ENCODE measurements at regions of chr20 and their contacts with region 1.

Region 1: GRCh38 chr20:1313236-1313964 is 15.5 kb downstream of the SDCBP2 start:
- DNase-seq: peak; percentile 63 to 75
- H3K4me3 ChIP-seq: no peak overlapping the region
- H3K4me3 Mint-ChIP-seq: no peak overlapping the region
- H3K27ac Mint-ChIP-seq: no peak overlapping the region
- H3K4me1 ChIP-seq: no peaks in the 10 kb centered on the region
- H3K4me1 Mint-ChIP-seq: no peaks in the 10 kb centered on the region
- H3K27me3 ChIP-seq: no peaks in the 10 kb centered on the region
- H3K27me3 Mint-ChIP-seq: no peaks in the 10 kb centered on the region
- CTCF ChIP-seq: peak; percentile 92 to 93

Region 2: DNA sequence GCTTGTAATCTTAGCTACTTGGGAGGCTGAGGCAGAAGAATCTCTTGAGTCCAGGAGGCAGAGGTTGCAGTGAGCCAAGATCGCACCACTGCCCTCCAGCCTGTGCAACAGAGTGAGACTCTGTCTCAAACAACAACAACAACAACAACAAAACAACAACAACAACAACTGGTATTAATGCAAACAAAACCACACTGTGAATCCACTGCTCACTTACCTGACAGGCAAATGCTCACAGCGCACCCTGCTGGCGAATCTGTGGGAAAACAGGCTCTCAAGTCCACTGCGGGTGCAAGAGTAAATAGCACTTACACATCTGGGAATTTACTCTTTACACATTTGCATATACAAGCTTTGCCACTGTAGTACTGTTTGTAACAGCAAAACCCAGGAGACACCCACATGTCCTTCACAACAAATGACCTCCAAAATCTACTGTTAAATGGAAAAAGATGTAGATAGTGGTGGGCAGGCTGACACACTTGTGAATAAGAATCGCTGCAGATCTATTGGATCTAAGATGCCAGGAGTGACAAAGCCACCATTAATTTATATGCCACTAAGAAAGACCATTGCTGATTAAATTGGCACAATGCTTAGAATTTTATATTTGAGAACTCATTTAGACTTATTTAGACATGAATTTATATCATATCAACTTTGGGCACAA is 124.0 kb after region 1 on chr20:
- CTCF ChIA-PET with region 1: interaction called, 7 read pairs
- POLR2A ChIA-PET with region 1: no interaction called
- intact Hi-C with region 1: loop called (anchors 1 kb)
- DNase-seq: peak; percentile 73 to 76
- H3K4me3 ChIP-seq: no peak overlapping the region
- H3K4me3 Mint-ChIP-seq: no peak overlapping the region
- H3K27ac Mint-ChIP-seq: no peak overlapping the region
- H3K4me1 ChIP-seq: no peaks in the 10 kb centered on the region
- H3K4me1 Mint-ChIP-seq: no peaks in the 10 kb centered on the region
- H3K27me3 ChIP-seq: no peaks in the 10 kb centered on the region
- H3K27me3 Mint-ChIP-seq: no peaks in the 10 kb centered on the region
- CTCF ChIP-seq: peak; percentile 83 to 94